ENCODE measurements at regions of chr5 and their contacts with region 1.

Region 1: GRCh38 chr5:176447982-176448608 is at the start of gene FAF2:
- DNase-seq: peak; percentile 99
- H3K4me3 ChIP-seq: peak within 1 kb of the TSS; percentile 75 to 99 (median 90)
- H3K27ac ChIP-seq: peak within 1 kb of the TSS; percentile 98
- H3K4me1 ChIP-seq: peaks cover 14% of the 10 kb centered on the region
- H3K27me3 ChIP-seq: no peaks in the 10 kb centered on the region
- CTCF ChIP-seq: peak; percentile 96 to 100
- POLR2A ChIP-seq: peak; percentile 94
- total RNA-seq, gene FAF2: 43.5 and 50.1 TPM in 2 replicates

Region 2: DNA sequence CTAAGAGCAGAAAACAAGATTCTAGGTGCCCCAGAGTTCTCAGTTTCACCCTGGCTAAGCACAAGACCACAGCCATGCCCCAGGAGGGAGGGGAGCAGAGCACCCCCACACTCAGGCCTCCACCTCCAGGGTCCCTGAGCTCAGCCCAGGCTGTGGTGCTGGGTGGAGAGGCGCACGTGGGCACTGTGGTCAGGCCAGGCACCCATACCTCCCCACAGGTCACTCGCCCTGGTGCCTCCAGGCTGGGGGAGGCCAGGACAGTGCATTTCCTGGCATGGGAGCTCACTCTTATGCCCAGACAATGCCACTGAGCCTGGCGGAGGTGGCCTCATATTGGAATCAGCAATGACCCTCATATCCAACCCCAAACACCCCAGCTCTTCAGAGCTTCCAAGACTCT is 711.4 kb before region 1 on chr5:
- CTCF ChIA-PET with region 1: no interaction called
- POLR2A ChIA-PET with region 1: no interaction called
- dilution Hi-C with region 1: no loop called
- intact Hi-C with region 1: no loop called
- DNase-seq: no peak
- H3K4me3 ChIP-seq: no peak overlapping the region
- H3K27ac ChIP-seq: no peak overlapping the region
- H3K4me1 ChIP-seq: no peaks in the 10 kb centered on the region
- H3K27me3 ChIP-seq: no peaks in the 10 kb centered on the region
- CTCF ChIP-seq: no peak
- POLR2A ChIP-seq: no peak

Region 3: DNA sequence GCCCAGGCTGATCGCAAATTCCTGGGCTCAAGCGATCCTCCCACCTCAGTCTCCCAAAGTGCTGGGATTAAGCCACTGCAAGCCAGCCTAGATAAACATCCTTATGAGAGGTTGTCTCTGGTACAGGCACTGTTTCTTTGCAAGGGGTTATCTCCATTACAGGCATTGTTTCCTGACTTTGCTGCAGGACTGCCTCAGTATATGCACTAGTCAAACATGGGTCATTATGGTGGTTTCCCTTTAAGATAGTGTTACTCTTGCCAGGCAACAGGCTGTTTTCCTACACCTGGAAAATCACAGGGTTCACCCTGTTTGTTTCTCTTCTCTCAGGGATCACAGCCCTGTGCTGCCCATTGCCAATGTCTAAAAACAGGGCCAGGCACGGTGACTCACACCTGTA is 23.9 kb before region 1 on chr5:
- CTCF ChIA-PET with region 1: interaction called, 18 read pairs
- POLR2A ChIA-PET with region 1: interaction called, 3 read pairs
- dilution Hi-C with region 1: no loop called
- intact Hi-C with region 1: no loop called
- DNase-seq: peak; percentile 89
- H3K4me3 ChIP-seq: no peak overlapping the region
- H3K27ac ChIP-seq: no peak overlapping the region
- H3K4me1 ChIP-seq: peaks cover 14% of the 10 kb centered on the region
- H3K27me3 ChIP-seq: no peaks in the 10 kb centered on the region
- CTCF ChIP-seq: no peak
- POLR2A ChIP-seq: no peak

Region 4: GRCh38 chr5:176436661-176437071 is 11.4 kb before region 1 on chr5:
- CTCF ChIA-PET with region 1: interaction called, 13 read pairs
- POLR2A ChIA-PET with region 1: no interaction called
- dilution Hi-C with region 1: no loop called
- intact Hi-C with region 1: loop called (anchors 1 kb)
- DNase-seq: peak; percentile 47
- H3K4me3 ChIP-seq: peak overlapping the region in 1 of 3 experiments; percentile 32
- H3K27ac ChIP-seq: peak overlapping the region; percentile 68
- H3K4me1 ChIP-seq: peaks cover 24% of the 10 kb centered on the region
- H3K27me3 ChIP-seq: no peaks in the 10 kb centered on the region
- CTCF ChIP-seq: no peak
- POLR2A ChIP-seq: no peak

Region 5: DNA sequence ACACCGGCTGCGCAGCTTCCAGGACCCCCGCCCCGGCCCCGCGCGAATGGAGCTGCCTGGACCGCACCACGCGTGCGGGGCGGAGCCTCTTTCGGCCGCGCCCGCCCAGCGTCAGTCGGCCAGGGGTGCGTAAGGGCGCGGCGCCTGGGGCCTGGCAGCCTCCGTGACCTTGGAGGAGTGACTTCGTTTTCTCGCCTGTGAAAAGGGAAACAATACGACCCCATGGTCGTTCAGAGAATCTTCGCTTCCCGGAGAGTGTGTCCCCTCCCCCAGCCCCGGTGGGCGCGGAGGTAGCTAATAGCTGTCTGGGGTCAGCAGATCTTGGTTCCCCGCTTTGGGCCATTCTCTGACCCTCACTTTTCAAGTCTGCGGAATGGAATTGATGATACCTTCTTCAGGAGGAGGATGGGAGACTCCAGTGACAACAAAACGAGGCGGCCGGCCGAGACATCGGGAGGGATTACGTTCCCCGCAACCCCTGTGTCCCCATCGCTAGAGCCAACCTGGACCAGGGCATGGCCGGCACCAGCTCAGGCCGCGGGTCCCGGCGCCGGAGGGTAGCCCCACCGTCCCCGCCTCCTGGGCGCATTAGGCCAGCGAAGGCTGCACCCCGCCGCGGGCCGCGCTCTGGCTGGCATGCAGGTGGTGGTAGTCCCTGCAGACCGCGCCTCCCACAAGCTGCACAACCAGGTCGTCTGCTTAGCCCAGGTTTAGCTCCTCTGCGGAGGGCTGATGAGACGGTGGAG is 95.5 kb after region 1 on chr5:
- CTCF ChIA-PET with region 1: interaction called, 27 read pairs
- POLR2A ChIA-PET with region 1: no interaction called
- dilution Hi-C with region 1: no loop called
- intact Hi-C with region 1: loop called (anchors 1 kb)
- DNase-seq: no peak
- H3K4me3 ChIP-seq: peak overlapping the region; percentile 50 to 69 (median 64)
- H3K27ac ChIP-seq: no peak overlapping the region
- H3K4me1 ChIP-seq: peaks cover 31% of the 10 kb centered on the region
- H3K27me3 ChIP-seq: no peaks in the 10 kb centered on the region
- CTCF ChIP-seq: no peak
- POLR2A ChIP-seq: peak; percentile 36

Region 6: GRCh38 chr5:176803940-176804498 is 355.9 kb after region 1 on chr5:
- CTCF ChIA-PET with region 1: no interaction called
- POLR2A ChIA-PET with region 1: no interaction called
- dilution Hi-C with region 1: no loop called
- intact Hi-C with region 1: no loop called
- DNase-seq: peak; percentile 27
- H3K4me3 ChIP-seq: no peak overlapping the region
- H3K27ac ChIP-seq: no peak overlapping the region
- H3K4me1 ChIP-seq: no peaks in the 10 kb centered on the region
- H3K27me3 ChIP-seq: peaks cover 2 to 5% of the 10 kb centered on the region in 2 experiments
- CTCF ChIP-seq: no peak
- POLR2A ChIP-seq: no peak

Region 7: DNA sequence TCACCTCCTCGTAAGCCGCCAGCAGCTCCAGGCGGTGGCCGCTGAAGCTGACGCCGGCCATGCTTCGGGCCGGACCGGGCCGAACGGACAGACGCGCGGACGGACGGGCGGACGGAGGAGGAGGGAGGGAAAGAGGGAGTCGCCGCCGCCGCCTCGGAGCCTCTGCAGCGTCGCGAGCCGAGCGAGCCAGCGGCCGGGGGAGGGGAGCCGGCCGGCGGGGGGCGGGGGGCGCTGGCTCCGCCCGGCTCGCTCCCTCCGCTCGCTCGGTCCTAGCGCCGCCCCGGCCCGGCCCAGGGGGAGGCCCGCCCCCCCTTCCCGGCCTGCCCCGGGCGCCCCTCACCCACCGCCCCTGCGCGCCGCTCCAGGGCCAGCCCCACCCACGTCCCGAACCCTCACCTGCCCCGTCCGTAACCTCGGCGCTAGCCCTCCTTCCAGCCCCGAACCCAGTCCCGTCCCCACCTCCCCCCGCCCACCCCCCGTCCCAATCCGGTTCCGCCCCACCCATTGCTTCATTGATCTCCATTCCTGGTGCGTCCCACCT is 1025.4 kb after region 1 on chr5 and contains the start of gene DBN1:
- CTCF ChIA-PET with region 1: no interaction called
- POLR2A ChIA-PET with region 1: no interaction called
- dilution Hi-C with region 1: no loop called
- intact Hi-C with region 1: loop called (anchors 10 kb)
- DNase-seq: peak; percentile 30
- H3K4me3 ChIP-seq: peak within 1 kb of the TSS; percentile 58 to 82 (median 72)
- H3K27ac ChIP-seq: peak within 1 kb of the TSS; percentile 42
- H3K4me1 ChIP-seq: peaks cover 31% of the 10 kb centered on the region
- H3K27me3 ChIP-seq: no peaks in the 10 kb centered on the region
- CTCF ChIP-seq: no peak
- POLR2A ChIP-seq: peak; percentile 33
- total RNA-seq, gene DBN1: 310 and 336 TPM in 2 replicates